Aorta (tissue), 5 donors: ENCODE measurements at regions of chr3 and their contacts with region 1.

Region 1: GRCh38 chr3:152071924-152072323 is 196.8 kb upstream of the MBNL1 start:
- DNase-seq: no peak
- ATAC-seq: peak; percentile 80
- H3K4me3 ChIP-seq: no peak overlapping the region
- H3K27ac ChIP-seq: no peak overlapping the region
- H3K4me1 ChIP-seq: no peaks in the 10 kb centered on the region
- H3K27me3 ChIP-seq: no peaks in the 10 kb centered on the region

Region 2: DNA sequence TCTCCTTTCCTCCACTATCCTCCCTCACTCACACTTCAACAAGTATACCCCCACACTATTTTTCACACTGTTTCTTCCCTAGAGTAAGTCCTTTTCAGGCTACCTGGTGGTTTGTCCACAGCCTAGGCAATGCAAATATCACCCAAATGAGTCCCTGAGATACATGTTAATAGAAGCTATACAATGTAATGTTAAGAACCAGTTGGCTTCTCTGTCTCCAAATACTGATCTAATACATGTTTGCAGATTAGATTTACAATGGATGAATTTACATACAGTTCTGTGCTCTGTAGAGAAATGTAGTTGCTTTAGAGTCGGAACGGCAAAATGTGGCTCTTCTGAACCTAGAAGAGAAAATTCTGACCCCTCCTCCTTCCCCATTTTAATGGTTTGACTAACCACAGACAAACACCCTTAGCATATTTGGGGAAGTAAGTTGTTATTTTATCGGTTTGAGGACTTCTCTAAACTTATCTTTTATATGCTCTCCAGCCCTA is 133.2 kb after region 1 on chr3:
- intact Hi-C with region 1: loop called in 1 of 2 experiments (anchors 10 kb)
- DNase-seq: no peak
- ATAC-seq: peak; percentile 25
- H3K4me3 ChIP-seq: peak overlapping the region; percentile 80 to 93
- H3K27ac ChIP-seq: peak overlapping the region; percentile 96 to 99
- H3K4me1 ChIP-seq: peaks cover 4 to 6% of the 10 kb centered on the region in 2 donors
- H3K27me3 ChIP-seq: no peaks in the 10 kb centered on the region

Region 3: DNA sequence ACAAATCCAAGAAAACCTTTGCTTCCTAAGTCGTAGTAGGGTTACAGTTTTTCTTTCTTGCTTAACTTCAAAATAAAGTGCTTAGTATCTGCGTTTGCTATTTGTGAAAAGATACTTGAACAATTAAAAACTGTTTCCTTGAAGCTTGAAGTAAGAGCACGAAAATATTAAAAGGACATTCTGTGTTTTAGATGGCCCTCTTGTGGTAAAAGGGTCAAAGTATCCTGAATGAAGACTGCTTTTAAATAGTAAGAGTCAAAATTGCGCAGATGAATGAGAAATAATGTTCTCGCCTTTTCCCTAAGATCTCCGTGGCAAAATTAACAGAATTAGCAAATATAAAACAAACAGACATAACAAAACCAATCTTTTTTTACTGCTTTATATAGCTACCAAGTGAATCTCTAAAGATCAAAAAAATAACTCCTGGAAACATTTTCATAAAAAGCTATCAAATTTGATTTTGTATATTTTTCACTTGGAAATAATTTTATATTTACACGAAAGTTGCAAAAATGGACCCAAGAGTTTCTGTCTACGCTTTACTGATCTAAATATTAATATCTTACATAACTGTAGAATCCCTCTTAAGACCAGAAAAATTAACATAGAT is 372.2 kb after region 1 on chr3:
- intact Hi-C with region 1: loop called in 1 of 2 experiments (anchors 5 kb)
- DNase-seq: no peak
- ATAC-seq: peak; percentile 83
- H3K4me3 ChIP-seq: no peak overlapping the region
- H3K27ac ChIP-seq: no peak overlapping the region
- H3K4me1 ChIP-seq: peaks cover 1 to 4% of the 10 kb centered on the region in 2 donors
- H3K27me3 ChIP-seq: no peaks in the 10 kb centered on the region